CD8-positive, alpha-beta memory T cell (primary cell): ENCODE measurements at regions of chr12 and their contacts with region 1.

Region 1: DNA sequence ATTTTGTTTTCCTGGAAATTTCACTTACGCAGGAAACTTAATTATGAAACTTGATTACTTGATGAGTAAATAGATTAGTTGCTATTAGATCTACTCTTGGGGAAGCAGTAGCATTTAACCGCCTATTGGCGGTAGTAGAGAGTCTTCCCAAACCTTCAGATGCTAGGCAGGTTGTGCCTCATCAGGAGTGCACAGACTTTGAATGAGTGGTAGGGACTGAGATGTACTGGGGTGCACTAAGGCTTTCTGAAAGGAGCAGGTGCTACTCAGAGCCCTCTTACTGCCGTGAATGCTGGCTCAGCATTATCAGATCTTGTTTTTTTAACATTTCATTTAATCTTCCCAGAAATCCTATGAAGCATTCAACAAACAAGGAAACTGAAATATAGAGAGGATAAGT is 7.7 kb downstream of the GATC start:
- DNase-seq: peak in 3 of 5 donors; percentile 24 to 52 (median 26)
- H3K4me3 ChIP-seq: no peak overlapping the region
- H3K4me3 Mint-ChIP-seq: no peak overlapping the region
- H3K27ac ChIP-seq: no peak overlapping the region
- H3K27ac Mint-ChIP-seq: peak overlapping the region in 4 of 8 donors; percentile 61 to 75 (median 70)
- H3K4me1 ChIP-seq: no peaks in the 10 kb centered on the region
- H3K4me1 Mint-ChIP-seq: peaks cover 0 to 8% (median 5%) of the 10 kb centered on the region in 3 donors
- H3K27me3 ChIP-seq: no peaks in the 10 kb centered on the region
- H3K27me3 Mint-ChIP-seq: no peaks in the 10 kb centered on the region

Region 2: DNA sequence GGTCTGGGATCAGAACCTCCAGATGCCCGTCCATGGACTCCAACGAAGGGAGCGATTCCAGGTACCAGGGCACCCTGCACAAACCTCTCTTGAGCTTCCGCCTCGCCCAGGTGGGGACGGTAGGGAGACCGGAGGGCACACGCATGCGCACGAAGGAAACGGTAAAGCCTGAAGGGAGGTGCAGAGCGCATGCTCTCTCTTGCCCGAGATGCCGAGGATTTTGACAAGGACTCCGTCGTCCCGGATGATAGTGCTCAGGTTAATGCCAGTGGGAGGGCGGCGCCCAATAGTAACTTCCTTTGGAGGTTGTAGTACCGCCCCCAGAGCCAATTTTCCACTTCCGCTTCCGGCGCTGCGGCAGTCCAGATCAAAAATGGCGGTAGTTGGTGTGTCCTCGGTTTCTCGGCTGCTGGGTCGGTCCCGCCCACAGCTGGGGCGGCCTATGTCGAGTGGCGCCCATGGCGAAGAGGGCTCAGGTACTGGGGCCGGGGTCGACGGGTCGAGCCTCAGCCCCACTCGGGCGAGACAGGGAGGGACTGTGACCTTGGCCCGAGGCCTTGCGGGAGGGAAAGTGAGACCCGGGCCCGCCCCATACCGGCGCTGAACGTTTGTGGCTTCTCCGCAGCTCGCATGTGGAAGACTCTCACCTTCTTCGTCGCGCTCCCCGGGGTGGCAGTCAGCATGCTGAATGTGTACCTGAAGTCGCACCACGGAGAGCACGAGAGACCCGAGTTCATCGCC is 16.1 kb before region 1 on chr12 and contains the start of gene COX6A1:
- CTCF ChIA-PET with region 1: interaction called, 12 read pairs
- POLR2A ChIA-PET with region 1: no interaction called
- DNase-seq: peak; percentile 95 to 99 (median 96)
- H3K4me3 ChIP-seq: peak within 1 kb of the TSS; percentile 57
- H3K4me3 Mint-ChIP-seq: peak within 1 kb of the TSS; percentile 91 to 97 (median 94)
- H3K27ac ChIP-seq: peak within 1 kb of the TSS; percentile 64
- H3K27ac Mint-ChIP-seq: peak within 1 kb of the TSS; percentile 91 to 99 (median 94)
- H3K4me1 ChIP-seq: peaks cover 22% of the 10 kb centered on the region
- H3K4me1 Mint-ChIP-seq: peaks cover 22 to 36% (median 29%) of the 10 kb centered on the region in 3 donors
- H3K27me3 ChIP-seq: no peaks in the 10 kb centered on the region
- H3K27me3 Mint-ChIP-seq: peaks cover 4 to 8% of the 10 kb centered on the region in 2 donors
- total RNA-seq, gene COX6A1: 475 TPM

Region 3: DNA sequence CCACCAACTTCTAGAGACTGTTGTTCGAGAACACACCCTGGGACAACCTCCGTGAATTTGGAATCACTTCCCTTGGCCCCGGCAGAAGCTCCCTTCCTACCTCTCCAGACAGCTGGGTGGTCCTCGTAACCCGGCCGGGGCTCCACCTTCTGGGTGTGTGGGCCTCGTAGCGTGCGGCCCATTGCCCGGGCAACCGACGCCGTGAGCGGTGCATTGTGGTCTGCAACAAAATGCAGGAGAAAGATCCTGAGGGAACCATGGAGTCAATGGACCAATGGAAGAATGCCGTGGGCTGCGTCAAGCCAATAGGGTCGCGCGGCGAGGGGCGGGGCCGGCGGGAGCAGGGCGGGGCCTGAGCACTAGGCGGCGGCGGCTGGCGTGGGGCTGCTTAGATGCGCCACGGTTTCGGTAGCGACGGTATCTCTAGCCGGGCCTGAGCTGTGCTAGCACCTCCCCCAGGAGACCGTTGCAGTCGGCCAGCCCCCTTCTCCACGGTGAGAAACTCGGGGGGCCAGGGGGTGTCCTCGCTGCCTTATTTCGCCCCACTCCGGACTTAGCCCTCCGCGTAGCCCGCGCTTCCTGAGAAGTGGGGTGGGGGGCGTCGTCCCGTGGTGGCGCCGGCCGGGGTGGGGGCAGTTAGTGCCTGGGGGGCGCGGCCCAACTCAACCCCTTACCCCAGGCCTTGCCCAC is 41.9 kb after region 1 on chr12 and contains the start of gene DYNLL1:
- CTCF ChIA-PET with region 1: interaction called, 10 read pairs
- POLR2A ChIA-PET with region 1: interaction called, 4 read pairs
- DNase-seq: peak; percentile 95 to 98 (median 97)
- H3K4me3 ChIP-seq: peak within 1 kb of the TSS; percentile 87
- H3K4me3 Mint-ChIP-seq: peak within 1 kb of the TSS; percentile 91 to 98 (median 94)
- H3K27ac ChIP-seq: peak within 1 kb of the TSS; percentile 78
- H3K27ac Mint-ChIP-seq: peak within 1 kb of the TSS; percentile 77 to 98 (median 92)
- H3K4me1 ChIP-seq: peaks cover 17% of the 10 kb centered on the region
- H3K4me1 Mint-ChIP-seq: peaks cover 30 to 42% (median 38%) of the 10 kb centered on the region in 3 donors
- H3K27me3 ChIP-seq: no peaks in the 10 kb centered on the region
- H3K27me3 Mint-ChIP-seq: no peaks in the 10 kb centered on the region
- total RNA-seq, gene DYNLL1: 288 to 296 TPM